Heart left ventricle (tissue), 16 donors: ENCODE measurements at regions of chr7 and their contacts with region 1.

Region 1: GRCh38 chr7:94395141-94396036 is 694 bp downstream of the COL1A2 start:
- DNase-seq: peak in 3 of 5 donors; percentile 41 to 48 (median 41)
- ATAC-seq: peak; percentile 56 to 78 (median 70)
- H3K4me3 ChIP-seq: peak overlapping the region; percentile 26 to 68 (median 61)
- H3K27ac ChIP-seq: peak overlapping the region; percentile 68 to 92 (median 84)
- H3K4me1 ChIP-seq: peaks cover 0 to 35% (median 10%) of the 10 kb centered on the region in 12 donors
- H3K27me3 ChIP-seq: peaks cover 0 to 11% (median 2%) of the 10 kb centered on the region in 9 donors
- CTCF ChIP-seq: peak; percentile 58 to 85 (median 74)
- POLR2A ChIP-seq: no peak

Region 2: GRCh38 chr7:94348142-94348541 is 47.2 kb before region 1 on chr7:
- intact Hi-C with region 1: loop called in 1 of 10 experiments (anchors 2 kb)
- DNase-seq: peak in 4 of 5 donors; percentile 39 to 43 (median 42)
- ATAC-seq: peak; percentile 71 to 92 (median 80)
- H3K4me3 ChIP-seq: peak overlapping the region in 2 of 12 donors; percentile 6 to 29
- H3K27ac ChIP-seq: peak overlapping the region in 10 of 12 donors; percentile 3 to 76 (median 63)
- H3K4me1 ChIP-seq: peaks cover 0 to 19% (median 0%) of the 10 kb centered on the region in 12 donors
- H3K27me3 ChIP-seq: no peaks in the 10 kb centered on the region
- CTCF ChIP-seq: no peak
- POLR2A ChIP-seq: no peak

Region 3: GRCh38 chr7:94374231-94374630 is 21.2 kb before region 1 on chr7:
- intact Hi-C with region 1: loop called in 2 of 10 experiments (anchors 2 kb)
- DNase-seq: peak; percentile 71 to 80 (median 75)
- ATAC-seq: peak; percentile 67 to 92 (median 90)
- H3K4me3 ChIP-seq: peak overlapping the region in 8 of 12 donors; percentile 11 to 47 (median 28)
- H3K27ac ChIP-seq: peak overlapping the region; percentile 72 to 99 (median 84)
- H3K4me1 ChIP-seq: peaks cover 0 to 28% (median 4%) of the 10 kb centered on the region in 12 donors
- H3K27me3 ChIP-seq: no peaks in the 10 kb centered on the region
- CTCF ChIP-seq: no peak
- POLR2A ChIP-seq: peak in 1 of 2 donors; percentile 33